ENCODE measurements at regions of chrX and their contacts with region 1.

Region 1: DNA sequence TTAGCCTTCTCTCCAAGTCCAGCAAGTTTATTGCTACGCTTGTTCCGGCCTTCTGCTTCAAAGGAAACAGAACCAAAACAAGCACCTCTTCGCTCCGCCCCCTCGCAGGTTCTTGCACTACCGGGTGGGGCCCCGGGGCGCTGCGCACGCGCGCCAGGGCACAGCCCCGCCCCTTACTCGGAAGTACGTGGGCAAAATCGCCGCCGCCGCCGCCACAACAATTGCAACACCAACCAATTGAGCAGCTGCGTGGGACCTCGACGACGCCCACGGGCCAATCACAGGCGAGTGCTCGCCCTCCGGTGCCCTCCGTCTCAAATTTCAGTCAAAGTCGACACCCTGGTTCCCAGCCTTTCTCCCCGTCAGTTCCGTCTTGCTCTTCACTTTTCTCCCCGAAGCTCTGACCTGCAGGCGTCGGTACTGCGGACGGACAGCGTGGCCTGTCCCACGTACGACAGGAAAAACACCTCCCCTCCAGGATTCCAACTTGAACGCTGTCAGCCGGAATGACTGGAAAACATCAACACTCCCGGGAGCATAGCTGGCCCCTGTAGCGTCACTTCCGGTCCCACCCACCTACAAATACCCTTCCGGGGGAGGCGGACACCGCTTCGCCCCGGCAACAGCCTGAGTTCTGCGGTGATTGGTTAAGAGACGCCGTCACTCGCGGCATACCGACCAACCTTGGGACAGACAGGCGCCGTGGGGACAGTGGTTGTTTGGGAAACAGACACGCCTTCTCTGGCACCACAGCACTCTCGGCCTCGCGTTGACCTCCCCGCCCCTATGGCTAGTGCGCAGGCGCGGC is 624 bp upstream of the OTUD5 start:
- DNase-seq: peak; percentile 96
- H3K4me3 Mint-ChIP-seq: peak overlapping the region; percentile 98
- H3K27ac Mint-ChIP-seq: peak overlapping the region; percentile 100
- H3K4me1 Mint-ChIP-seq: peaks cover 47% of the 10 kb centered on the region
- H3K27me3 Mint-ChIP-seq: no peaks in the 10 kb centered on the region

Region 2: DNA sequence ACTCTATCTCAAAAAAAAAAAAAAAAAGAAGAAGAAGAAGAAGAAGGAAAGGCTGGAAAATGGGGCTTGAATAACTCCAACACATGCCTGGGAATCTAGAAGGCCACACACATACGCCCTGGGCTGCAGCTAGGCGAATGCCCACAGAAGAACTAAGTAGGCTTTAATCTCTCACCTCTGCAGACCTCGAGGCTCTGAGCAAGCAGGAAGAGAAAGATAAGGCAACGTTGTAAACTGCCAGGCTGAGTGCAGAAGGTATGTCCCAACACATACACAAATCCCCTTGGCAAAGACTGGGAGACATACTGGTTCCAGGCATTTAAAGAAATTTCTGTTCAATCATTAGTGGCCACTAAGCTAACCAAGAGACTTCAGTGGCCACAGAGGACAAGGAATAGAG is 506.3 kb before region 1 on chrX:
- CTCF ChIA-PET with region 1: no interaction called
- intact Hi-C with region 1: no loop called
- DNase-seq: no peak
- H3K4me3 Mint-ChIP-seq: no peak overlapping the region
- H3K27ac Mint-ChIP-seq: no peak overlapping the region
- H3K4me1 Mint-ChIP-seq: no peaks in the 10 kb centered on the region
- H3K27me3 Mint-ChIP-seq: no peaks in the 10 kb centered on the region

Region 3: DNA sequence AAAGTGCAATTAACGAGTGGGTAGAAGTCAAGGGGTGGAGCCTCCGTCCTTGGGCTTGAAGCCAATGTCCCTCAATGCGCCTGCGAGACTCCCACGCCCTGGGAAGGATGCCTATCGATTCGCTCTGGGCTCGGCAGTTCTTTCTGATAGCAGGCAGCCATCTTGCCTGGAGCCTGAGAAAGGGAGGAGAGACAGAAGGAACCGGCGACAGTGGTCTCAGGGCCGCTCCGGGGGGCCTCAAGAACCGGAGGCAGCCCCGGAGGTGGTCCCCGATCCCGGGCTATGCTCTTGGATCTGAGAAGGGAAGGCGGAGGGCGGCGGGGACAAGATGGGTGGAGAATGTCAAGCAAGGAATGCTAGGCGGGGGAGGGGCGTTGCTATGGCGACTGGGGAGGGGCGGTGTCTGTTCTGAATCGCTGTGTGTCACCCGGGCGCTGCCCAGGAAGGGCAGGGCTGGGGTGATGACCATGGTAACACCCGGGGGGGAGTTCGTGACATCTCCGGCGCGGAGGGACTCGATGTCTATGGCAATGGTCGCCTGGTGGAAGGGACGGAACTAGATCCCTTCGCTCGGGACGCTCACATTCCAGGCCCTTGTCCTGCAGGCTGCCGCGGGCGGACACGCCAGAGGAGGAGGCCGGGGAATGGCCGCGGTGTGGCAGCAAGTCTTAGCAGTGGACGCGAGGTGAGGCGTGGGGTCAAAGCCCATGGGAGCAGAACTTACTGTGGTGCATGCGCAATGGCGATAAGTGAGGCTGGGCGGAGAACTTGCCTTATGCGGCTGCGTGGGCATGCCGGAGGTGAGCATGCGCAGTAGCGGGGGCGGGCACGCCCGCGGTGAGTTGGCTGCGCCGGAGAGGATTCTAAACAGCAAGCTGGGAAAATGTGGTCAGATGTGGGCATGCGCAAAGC is 360.4 kb before region 1 on chrX and contains the start of gene WDR13:
- CTCF ChIA-PET with region 1: no interaction called
- intact Hi-C with region 1: loop called (anchors 1 kb)
- DNase-seq: peak; percentile 94
- H3K4me3 Mint-ChIP-seq: peak within 1 kb of the TSS; percentile 97
- H3K27ac Mint-ChIP-seq: peak within 1 kb of the TSS; percentile 97
- H3K4me1 Mint-ChIP-seq: peaks cover 7% of the 10 kb centered on the region
- H3K27me3 Mint-ChIP-seq: no peaks in the 10 kb centered on the region
- total RNA-seq, gene WDR13: 37.0 to 40.1 TPM

Region 4: DNA sequence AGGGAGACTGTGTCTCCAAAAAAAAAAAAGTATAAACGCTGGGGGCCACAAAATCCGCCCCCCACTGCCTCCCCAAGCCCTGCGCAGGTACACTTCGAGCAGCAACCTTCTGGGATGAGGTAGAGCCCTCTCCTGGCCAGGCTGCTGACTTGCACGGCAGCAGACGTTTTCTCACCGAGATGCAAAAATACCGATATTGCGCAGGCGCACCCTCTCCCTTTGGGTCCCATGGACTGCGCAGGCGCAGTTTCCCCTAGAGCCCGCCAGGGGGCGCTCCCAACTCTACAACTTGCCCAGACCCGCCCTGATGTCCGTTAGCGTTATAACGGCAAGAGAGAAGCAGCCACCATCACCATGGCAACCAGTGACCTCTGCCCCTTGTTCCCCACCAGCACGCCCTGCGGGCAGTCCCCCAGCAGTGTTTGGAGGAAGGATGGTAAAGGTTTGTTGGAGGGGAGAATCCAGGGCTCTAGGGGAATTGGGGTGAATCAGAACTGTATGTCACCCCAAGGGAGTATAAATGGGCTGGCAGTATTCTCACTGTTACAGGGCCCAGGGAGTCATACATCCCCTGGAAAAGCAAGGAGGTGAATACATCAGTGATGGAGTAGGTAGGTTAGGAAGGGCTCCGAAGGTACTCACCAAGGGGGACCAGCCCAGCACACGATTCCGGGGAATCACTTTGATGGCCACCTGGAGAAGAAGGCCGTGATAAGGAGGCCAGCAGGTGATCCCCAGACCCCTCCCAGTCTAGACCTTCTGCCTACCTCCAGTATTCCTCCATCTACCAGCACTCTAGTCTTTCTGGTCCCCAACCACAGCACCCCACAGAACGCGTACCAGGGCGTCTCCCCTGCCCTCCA is 40.7 kb before region 1 on chrX:
- CTCF ChIA-PET with region 1: no interaction called
- intact Hi-C with region 1: loop called (anchors 1 kb)
- DNase-seq: peak; percentile 92
- H3K4me3 Mint-ChIP-seq: peak overlapping the region; percentile 95
- H3K27ac Mint-ChIP-seq: peak overlapping the region; percentile 99
- H3K4me1 Mint-ChIP-seq: peaks cover 39% of the 10 kb centered on the region
- H3K27me3 Mint-ChIP-seq: peaks cover 2% of the 10 kb centered on the region

Region 5: DNA sequence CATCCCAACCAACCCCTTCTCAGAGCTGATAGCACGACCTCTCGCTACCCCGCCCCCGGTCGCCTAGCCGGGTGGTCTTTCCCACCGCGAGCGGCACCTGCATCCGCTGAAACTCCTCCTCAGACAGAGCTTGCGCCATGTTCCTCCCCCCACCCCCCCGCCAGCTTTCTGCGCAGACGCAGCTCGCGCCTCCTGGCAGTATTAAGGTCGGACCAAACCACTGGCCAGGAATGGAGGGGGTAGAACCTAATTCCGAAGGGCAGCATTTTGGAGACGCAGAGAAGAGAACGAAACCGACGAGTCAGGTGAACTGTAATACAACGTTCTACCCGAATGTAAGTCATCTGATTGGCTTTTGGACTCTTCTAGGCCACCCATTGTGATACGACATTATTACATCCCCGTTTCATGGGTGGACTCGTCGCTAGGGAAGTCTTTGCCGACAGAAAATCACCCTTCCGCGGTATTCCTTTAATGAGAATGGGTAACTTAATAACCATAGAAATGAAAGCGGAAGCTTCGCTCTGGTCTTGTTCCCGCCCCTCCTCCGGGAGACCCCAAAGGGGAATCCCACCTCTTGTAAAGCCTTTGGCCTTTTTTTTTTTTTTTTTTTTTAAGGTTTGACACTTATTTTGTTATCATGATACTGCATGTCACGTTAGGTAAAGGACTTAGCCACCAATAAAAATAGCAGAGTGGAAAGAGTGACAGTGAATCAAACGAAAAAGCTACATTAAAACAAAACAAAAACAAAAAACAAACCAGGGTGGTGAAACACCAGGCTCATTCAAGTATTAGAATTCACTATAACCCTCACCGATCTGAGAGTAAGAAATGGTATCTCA is 44.3 kb after region 1 on chrX and contains the start of gene GRIPAP1:
- CTCF ChIA-PET with region 1: no interaction called
- intact Hi-C with region 1: loop called (anchors 1 kb)
- DNase-seq: peak; percentile 85
- H3K4me3 Mint-ChIP-seq: peak within 1 kb of the TSS; percentile 99
- H3K27ac Mint-ChIP-seq: peak within 1 kb of the TSS; percentile 97
- H3K4me1 Mint-ChIP-seq: peaks cover 37% of the 10 kb centered on the region
- H3K27me3 Mint-ChIP-seq: no peaks in the 10 kb centered on the region
- total RNA-seq, gene GRIPAP1: 64.8 to 73.1 TPM

Region 6: DNA sequence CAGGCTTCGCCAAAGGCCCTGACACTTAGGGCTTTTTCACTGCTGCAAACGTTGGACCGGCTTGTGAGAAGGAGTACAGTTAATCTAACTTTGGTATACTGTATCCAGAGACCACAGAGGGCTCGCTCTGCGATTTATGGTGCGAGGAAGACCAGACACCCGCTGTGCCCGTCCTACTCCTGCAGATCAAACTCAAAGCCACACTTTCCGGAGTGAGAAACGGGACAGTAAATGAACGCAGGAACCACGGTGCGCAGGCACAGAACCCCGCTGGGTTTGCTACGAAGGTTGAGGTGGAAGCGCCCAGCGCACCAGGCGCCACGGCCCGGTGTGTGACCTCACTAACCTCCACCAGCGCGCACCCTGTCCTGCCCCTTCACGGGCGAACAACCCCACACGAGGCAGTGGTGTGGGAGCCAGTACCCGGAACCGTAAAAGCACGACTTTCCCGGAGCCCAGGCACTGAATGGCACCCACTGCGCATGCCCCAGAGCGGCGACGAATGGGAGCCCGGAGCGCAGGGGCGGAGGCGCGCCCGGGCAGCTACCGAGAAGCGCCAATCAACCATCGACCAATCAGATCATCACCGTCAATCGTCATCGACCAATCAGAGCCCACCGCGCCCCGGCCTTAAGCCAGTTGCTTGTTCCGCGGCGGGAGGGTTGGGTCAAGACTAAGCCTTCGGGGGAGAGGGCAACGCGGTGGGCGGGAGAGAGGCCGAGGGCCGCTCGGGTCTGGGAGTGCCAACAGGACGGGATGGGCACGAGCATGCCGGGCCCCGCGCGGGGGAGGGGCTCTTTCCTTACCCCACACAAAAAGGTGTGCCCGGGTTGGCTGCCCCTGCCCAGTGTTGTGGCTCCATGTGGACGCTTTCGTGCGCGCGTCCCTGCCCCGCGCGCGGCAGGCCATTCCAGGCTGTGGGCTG is 142.9 kb after region 1 on chrX:
- CTCF ChIA-PET with region 1: no interaction called
- intact Hi-C with region 1: loop called (anchors 1 kb)
- DNase-seq: peak; percentile 90
- H3K4me3 Mint-ChIP-seq: peak overlapping the region; percentile 90
- H3K27ac Mint-ChIP-seq: peak overlapping the region; percentile 89
- H3K4me1 Mint-ChIP-seq: peaks cover 8% of the 10 kb centered on the region
- H3K27me3 Mint-ChIP-seq: no peaks in the 10 kb centered on the region

Region 7: GRCh38 chrX:49163555-49164419 is 205.8 kb after region 1 on chrX:
- CTCF ChIA-PET with region 1: no interaction called
- intact Hi-C with region 1: loop called (anchors 5 kb)
- DNase-seq: peak; percentile 77
- H3K4me3 Mint-ChIP-seq: peak overlapping the region; percentile 76
- H3K27ac Mint-ChIP-seq: peak overlapping the region; percentile 93
- H3K4me1 Mint-ChIP-seq: peaks cover 27% of the 10 kb centered on the region
- H3K27me3 Mint-ChIP-seq: no peaks in the 10 kb centered on the region

Region 8: DNA sequence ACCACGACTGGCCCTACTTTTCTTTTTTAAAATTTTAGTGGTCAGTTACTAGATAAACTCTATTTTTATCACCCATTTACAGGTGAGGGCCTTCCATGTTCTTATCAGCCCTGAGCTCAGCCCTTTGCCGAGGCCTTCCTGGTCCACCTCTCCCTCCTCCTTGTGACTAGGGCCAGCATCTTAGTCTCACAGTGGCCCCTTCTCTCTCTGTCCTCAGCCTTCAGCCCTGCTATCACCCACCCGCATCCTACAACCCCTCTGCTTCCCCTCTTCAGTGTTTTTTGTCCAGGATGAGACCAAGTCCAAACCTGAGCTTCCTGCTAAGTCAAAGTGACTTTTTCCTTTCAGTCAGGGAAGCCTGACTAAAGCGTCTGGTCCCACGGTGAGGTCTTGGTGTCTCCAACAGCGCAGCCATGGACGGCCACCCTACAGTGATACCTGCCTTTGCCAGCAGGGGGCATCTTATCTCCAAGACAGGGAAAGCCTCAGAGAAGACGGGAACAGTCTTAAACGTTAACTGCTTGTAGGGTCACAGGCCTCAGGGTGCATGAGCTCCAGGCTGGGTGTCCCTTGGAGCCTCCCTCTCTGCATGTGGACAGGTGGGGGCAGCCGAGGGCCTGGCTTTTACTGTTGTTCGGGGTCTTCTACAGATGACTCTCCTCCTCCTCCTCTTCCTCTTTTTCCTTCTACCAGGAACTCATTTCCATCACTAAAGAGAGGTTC is 333.7 kb after region 1 on chrX:
- CTCF ChIA-PET with region 1: no interaction called
- intact Hi-C with region 1: no loop called
- DNase-seq: peak; percentile 88
- H3K4me3 Mint-ChIP-seq: no peak overlapping the region
- H3K27ac Mint-ChIP-seq: no peak overlapping the region
- H3K4me1 Mint-ChIP-seq: peaks cover 35% of the 10 kb centered on the region
- H3K27me3 Mint-ChIP-seq: no peaks in the 10 kb centered on the region

Measured in activated naive CD4-positive, alpha-beta T cell treated with anti-CD3 and anti-CD28 coated beads for 36 hours (primary cell).